ENCODE measurements at regions of chr1 and their contacts with region 1.

Region 1: DNA sequence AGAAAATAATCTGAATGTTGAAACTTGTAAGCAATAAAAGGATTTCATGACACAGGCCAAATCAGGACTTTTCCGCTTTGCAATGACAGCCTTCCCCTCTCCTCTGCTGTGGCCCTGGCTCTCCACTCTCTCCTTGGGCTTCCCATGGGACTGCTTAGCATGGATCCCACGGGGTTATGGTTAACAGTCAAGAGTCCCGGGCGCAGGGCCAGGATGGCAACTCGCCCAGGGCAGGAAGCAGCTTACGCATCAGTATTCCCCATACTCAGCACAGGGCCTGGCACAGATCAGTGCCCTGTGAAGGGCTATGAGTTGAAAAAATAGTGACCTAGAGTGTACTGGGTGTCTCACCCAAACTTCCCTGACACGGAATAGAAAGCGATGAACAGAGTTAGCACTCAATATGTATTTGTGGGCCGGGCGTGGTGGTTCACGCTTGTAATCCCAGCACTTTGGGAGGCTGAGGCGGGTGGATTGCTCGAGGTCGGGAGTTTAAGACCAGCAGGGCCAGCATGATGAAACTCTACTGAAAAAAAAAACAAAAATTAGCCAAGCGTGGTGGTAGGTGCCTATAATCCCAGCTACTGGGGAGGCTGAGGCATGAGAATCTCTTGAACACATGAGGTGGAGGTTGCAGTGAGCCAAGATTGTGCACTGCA is 29.1 kb upstream of the GRHL3 start:
- DNase-seq: peak; percentile 91
- H3K4me3 ChIP-seq: no peak overlapping the region
- H3K27ac ChIP-seq: peak overlapping the region; percentile 11
- H3K4me1 ChIP-seq: peaks cover 62% of the 10 kb centered on the region
- H3K27me3 ChIP-seq: no peaks in the 10 kb centered on the region
- CTCF ChIP-seq: no peak

Region 2: GRCh38 chr1:24222008-24222842 is 67.8 kb before region 1 on chr1:
- CTCF ChIA-PET with region 1: no interaction called
- dilution Hi-C with region 1: no loop called
- in situ Hi-C with region 1: no loop called
- intact Hi-C with region 1: no loop called
- DNase-seq: no peak
- H3K4me3 ChIP-seq: no peak overlapping the region
- H3K27ac ChIP-seq: no peak overlapping the region
- H3K4me1 ChIP-seq: no peaks in the 10 kb centered on the region
- H3K27me3 ChIP-seq: no peaks in the 10 kb centered on the region
- CTCF ChIP-seq: no peak

Region 3: GRCh38 chr1:24235921-24236781 is 53.9 kb before region 1 on chr1:
- CTCF ChIA-PET with region 1: no interaction called
- dilution Hi-C with region 1: no loop called
- in situ Hi-C with region 1: no loop called
- intact Hi-C with region 1: loop called (anchors 2 kb)
- DNase-seq: peak; percentile 73
- H3K4me3 ChIP-seq: no peak overlapping the region
- H3K27ac ChIP-seq: peak overlapping the region; percentile 49
- H3K4me1 ChIP-seq: peaks cover 16% of the 10 kb centered on the region
- H3K27me3 ChIP-seq: no peaks in the 10 kb centered on the region
- CTCF ChIP-seq: no peak

Region 4: DNA sequence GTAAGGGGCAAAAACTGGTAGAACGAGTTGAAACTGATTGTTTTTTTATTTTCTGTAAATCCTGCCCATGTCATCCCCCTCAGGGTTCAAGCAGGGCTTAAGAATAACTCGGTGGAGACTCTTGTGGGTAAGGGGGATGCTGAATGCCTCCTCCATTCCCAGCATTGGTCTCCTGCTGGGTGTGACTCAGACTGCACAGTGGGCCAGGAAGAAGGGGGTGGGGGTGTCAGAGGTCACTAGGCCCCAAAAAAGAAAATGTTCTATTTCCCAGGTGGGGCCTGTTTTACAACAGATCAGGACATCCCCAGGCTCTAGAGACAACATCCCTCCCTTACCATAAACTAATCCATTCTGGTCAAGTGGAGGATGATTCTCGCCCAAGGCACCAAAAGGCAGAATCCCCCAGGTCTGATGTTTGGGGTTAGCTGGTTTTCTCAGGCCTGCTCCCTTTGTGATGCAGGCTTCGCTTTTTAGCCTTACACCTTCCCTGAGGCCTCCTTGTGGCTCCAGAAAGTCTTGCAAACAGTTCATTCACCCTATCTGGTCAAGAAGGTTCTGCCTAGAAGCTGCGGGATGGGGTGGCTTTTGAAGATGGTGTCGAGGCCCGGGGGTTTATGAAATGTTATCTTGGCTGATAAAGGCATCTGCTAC is 18.4 kb after region 1 on chr1:
- CTCF ChIA-PET with region 1: no interaction called
- dilution Hi-C with region 1: no loop called
- in situ Hi-C with region 1: no loop called
- intact Hi-C with region 1: loop called (anchors 1 kb)
- DNase-seq: no peak
- H3K4me3 ChIP-seq: no peak overlapping the region
- H3K27ac ChIP-seq: no peak overlapping the region
- H3K4me1 ChIP-seq: peaks cover 16% of the 10 kb centered on the region
- H3K27me3 ChIP-seq: no peaks in the 10 kb centered on the region
- CTCF ChIP-seq: peak; percentile 11 to 31

Measured in mammary epithelial cell (primary cell).